Calu3 (cell line): ENCODE measurements at regions of chr7 and their contacts with region 1.

Region 1: GRCh38 chr7:42991919-42992591 is 59.9 kb downstream of the MRPL32 start:
- DNase-seq: no peak
- H3K4me3 Mint-ChIP-seq: no peak overlapping the region
- H3K27ac Mint-ChIP-seq: no peak overlapping the region
- H3K4me1 Mint-ChIP-seq: no peaks in the 10 kb centered on the region
- H3K27me3 Mint-ChIP-seq: peaks cover 26% of the 10 kb centered on the region
- CTCF ChIP-seq: no peak

Region 2: GRCh38 chr7:43004082-43004481 is 12.0 kb after region 1 on chr7:
- CTCF ChIA-PET with region 1: no interaction called
- intact Hi-C with region 1: loop called (anchors 1 kb)
- DNase-seq: no peak
- H3K4me3 Mint-ChIP-seq: no peak overlapping the region
- H3K27ac Mint-ChIP-seq: no peak overlapping the region
- H3K4me1 Mint-ChIP-seq: no peaks in the 10 kb centered on the region
- H3K27me3 Mint-ChIP-seq: no peaks in the 10 kb centered on the region
- CTCF ChIP-seq: no peak

Region 3: GRCh38 chr7:43040461-43040860 is 48.4 kb after region 1 on chr7:
- CTCF ChIA-PET with region 1: interaction called, 14 read pairs
- intact Hi-C with region 1: no loop called
- DNase-seq: no peak
- H3K4me3 Mint-ChIP-seq: no peak overlapping the region
- H3K27ac Mint-ChIP-seq: no peak overlapping the region
- H3K4me1 Mint-ChIP-seq: no peaks in the 10 kb centered on the region
- H3K27me3 Mint-ChIP-seq: no peaks in the 10 kb centered on the region
- CTCF ChIP-seq: no peak